ENCODE measurements at regions of chr10 and their contacts with region 1.

Region 1: GRCh38 chr10:133124357-133125211 is 35.4 kb upstream of the KNDC1 start:
- DNase-seq: peak in 1 of 2 donors; percentile 28
- ATAC-seq: peak; percentile 85

Region 2: GRCh38 chr10:132836832-132837540 is 287.6 kb before region 1 on chr10:
- intact Hi-C with region 1: loop called in 1 of 2 experiments (anchors 10 kb)
- DNase-seq: peak; percentile 21 to 24
- ATAC-seq: peak; percentile 34

Measured in left colon (tissue), 2 donors.